IMR-90 (cell line): ENCODE measurements at regions of chr2 and their contacts with region 1.

Region 1: GRCh38 chr2:175844169-175844568 is 157.9 kb downstream of the LNPK start:
- DNase-seq: peak; percentile 78
- ATAC-seq: peak; percentile 67
- H3K4me3 ChIP-seq: no peak overlapping the region
- H3K27ac ChIP-seq: no peak overlapping the region
- H3K4me1 ChIP-seq: no peaks in the 10 kb centered on the region; the same call in 1 of the 2 replicates
- H3K27me3 ChIP-seq: no peaks in the 10 kb centered on the region
- CTCF ChIP-seq: no peak
- POLR2A ChIP-seq: no peak
- RAD21 ChIP-seq: no peak

Region 2: GRCh38 chr2:176001916-176002687 is 157.9 kb after region 1 on chr2 and contains the start of gene LNPK:
- CTCF ChIA-PET with region 1: no interaction called
- POLR2A ChIA-PET with region 1: no interaction called
- dilution Hi-C with region 1: no loop called
- in situ Hi-C with region 1: no loop called
- intact Hi-C with region 1: loop called (anchors 5 kb)
- DNase-seq: peak; percentile 82
- ATAC-seq: peak; percentile 95
- H3K4me3 ChIP-seq: peak within 1 kb of the TSS; percentile 76
- H3K27ac ChIP-seq: peak within 1 kb of the TSS; percentile 65
- H3K4me1 ChIP-seq: no peaks in the 10 kb centered on the region; the same call in 1 of the 2 replicates
- H3K27me3 ChIP-seq: no peaks in the 10 kb centered on the region
- CTCF ChIP-seq: no peak
- POLR2A ChIP-seq: peak; percentile 60; the same call in 1 of the 2 replicates
- RAD21 ChIP-seq: no peak
- total RNA-seq, gene LNPK: 48.6 and 59.4 TPM in 2 replicates